Heart left ventricle (tissue), 16 donors: ENCODE measurements at regions of chr1 and their contacts with region 1.

Region 1: DNA sequence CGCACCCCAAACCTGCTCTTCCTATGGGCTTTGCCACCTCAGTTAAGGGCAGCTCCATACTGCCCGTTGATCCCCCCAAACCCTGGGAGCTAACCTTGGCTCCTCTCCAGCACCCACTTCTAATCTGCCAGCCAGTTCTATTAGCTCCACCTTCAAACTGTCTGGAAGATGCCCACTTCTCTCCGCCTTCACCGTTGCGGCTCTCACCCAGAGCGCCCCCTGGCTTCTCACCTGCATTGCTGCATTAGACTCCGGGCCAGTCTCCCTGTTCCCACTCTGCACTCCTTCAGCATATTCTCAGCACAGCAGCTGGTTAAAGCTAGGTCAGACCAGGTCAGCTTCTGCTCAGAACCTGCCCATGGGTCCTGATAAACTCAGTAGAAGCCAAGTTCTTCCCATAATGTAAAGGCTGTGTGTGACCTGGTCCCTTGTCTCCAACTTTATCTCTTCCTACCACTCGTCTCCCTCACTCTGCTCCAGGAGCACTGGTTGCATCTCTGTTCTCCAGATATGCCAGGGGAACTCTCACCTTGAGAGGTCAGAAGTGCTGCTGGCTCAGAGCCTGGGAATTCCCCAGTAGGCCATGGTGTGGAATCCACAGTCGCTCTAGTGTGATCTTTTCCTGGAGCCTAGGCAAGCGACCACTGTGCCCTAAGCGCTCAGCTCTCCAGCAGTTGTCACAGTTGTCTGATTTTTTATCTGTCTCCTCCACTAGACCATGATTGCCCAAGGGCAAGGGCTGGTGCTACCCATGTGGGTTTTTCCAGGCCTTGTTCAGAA is 150.3 kb downstream of the HMGB4 start:
- DNase-seq: peak; percentile 20 to 74 (median 40)
- ATAC-seq: peak; percentile 63 to 85 (median 78)
- H3K4me3 ChIP-seq: no peak overlapping the region
- H3K27ac ChIP-seq: no peak overlapping the region
- H3K4me1 ChIP-seq: peaks cover 0 to 8% (median 0%) of the 10 kb centered on the region in 12 donors
- H3K27me3 ChIP-seq: no peaks in the 10 kb centered on the region
- CTCF ChIP-seq: peak; percentile 34 to 66 (median 47)
- POLR2A ChIP-seq: no peak

Region 2: DNA sequence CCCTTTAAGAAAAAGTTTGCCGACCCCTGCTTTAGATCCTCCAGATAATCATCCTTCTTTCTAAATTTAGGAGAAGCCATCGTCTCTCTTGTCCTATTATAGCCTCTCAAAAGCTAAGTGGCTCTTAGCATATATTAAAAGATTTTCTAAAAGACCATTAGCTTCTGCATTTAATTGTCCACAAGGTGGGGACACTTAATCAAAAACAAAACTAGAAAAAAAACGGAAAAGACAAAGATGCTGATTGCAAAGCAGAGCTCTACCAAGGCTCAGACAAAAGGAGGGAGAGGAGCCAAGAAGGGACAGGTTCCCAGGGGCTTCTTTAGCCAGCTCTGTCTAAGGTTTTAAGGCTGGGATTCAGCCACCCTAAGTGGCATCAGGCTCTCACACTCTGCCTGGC is 278.5 kb before region 1 on chr1:
- intact Hi-C with region 1: loop called in 4 of 10 experiments (anchors 10 kb)
- DNase-seq: no peak
- ATAC-seq: no peak
- H3K4me3 ChIP-seq: no peak overlapping the region
- H3K27ac ChIP-seq: no peak overlapping the region
- H3K4me1 ChIP-seq: no peaks in the 10 kb centered on the region
- H3K27me3 ChIP-seq: peaks cover 0 to 8% (median 0%) of the 10 kb centered on the region in 9 donors
- CTCF ChIP-seq: peak in 10 of 12 donors; percentile 5 to 45 (median 38)
- POLR2A ChIP-seq: no peak

Region 3: GRCh38 chr1:33876970-33877650 is 137.0 kb before region 1 on chr1:
- intact Hi-C with region 1: loop called in 1 of 10 experiments (anchors 10 kb)
- DNase-seq: peak in 4 of 5 donors; percentile 33 to 81 (median 54)
- ATAC-seq: peak in 2 of 4 donors; percentile 60 to 91
- H3K4me3 ChIP-seq: no peak overlapping the region
- H3K27ac ChIP-seq: peak overlapping the region in 1 of 12 donors; percentile 4
- H3K4me1 ChIP-seq: peaks cover 0 to 13% (median 0%) of the 10 kb centered on the region in 12 donors
- H3K27me3 ChIP-seq: peaks cover 0 to 8% (median 0%) of the 10 kb centered on the region in 9 donors
- CTCF ChIP-seq: no peak
- POLR2A ChIP-seq: no peak

Region 4: DNA sequence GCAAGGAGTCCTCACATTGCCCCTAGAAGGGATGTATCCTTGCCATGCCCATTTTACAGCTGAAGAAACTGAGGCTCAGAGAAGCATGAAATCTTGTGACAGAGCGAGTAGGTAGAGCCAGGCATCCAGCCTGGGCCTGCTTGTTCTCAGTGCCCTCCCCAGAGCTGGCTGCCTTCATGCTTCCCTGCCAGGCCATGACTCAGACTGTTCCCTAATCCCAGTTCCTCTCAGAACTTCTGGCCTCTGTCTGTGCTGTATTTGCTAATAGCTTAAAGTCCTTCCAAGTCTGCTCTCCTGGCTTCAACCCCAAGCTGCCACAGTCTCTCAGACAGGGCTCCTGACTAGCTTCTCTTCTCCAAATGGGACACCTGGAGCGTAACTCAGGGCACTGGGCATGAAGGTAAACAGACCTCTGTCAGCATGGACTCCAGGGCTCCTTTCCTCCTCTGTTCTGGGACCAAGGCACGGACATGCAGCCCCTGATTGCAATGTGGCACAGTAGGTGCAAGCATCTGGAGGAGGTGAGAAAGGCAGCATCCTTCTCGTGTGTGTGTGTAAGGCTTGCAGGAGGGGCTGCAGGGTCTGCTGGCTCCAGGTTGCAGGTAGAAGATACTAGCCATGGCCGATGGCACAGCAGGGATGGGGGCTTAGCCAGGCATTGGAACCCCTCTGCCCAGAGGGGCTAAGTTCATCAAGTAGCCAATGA is 27.6 kb before region 1 on chr1:
- intact Hi-C with region 1: no loop called
- DNase-seq: peak in 4 of 5 donors; percentile 25 to 84 (median 52)
- ATAC-seq: peak; percentile 79 to 96 (median 94)
- H3K4me3 ChIP-seq: no peak overlapping the region
- H3K27ac ChIP-seq: peak overlapping the region in 2 of 12 donors; percentile 34 to 66
- H3K4me1 ChIP-seq: peaks cover 0 to 23% (median 8%) of the 10 kb centered on the region in 12 donors
- H3K27me3 ChIP-seq: no peaks in the 10 kb centered on the region
- CTCF ChIP-seq: no peak
- POLR2A ChIP-seq: no peak